ENCODE measurements at regions of chrX and their contacts with region 1.

Region 1: DNA sequence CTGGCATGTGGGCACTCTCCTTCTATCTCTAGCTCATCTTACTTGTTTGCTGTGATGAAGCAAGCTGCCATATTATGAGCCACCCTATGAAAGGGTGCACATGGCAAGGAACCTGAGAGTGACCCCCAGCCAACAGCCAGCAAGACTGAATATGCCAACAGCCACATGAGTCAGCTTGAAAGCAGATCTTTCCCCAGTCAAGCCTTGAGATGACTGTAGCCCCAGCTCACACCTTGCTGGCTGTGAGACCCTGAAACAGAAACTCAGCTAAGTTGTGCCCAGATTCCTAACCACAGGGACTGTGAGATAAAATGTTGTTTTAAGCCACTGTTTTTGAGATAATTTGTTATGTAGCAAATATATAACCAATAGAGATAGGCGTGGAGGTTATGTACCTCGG is 36.2 kb downstream of the KDM5C start:
- DNase-seq: peak; percentile 56
- H3K4me3 Mint-ChIP-seq: no peak overlapping the region
- H3K27ac Mint-ChIP-seq: no peak overlapping the region
- H3K4me1 Mint-ChIP-seq: peaks cover 18% of the 10 kb centered on the region
- H3K27me3 Mint-ChIP-seq: no peaks in the 10 kb centered on the region

Region 2: DNA sequence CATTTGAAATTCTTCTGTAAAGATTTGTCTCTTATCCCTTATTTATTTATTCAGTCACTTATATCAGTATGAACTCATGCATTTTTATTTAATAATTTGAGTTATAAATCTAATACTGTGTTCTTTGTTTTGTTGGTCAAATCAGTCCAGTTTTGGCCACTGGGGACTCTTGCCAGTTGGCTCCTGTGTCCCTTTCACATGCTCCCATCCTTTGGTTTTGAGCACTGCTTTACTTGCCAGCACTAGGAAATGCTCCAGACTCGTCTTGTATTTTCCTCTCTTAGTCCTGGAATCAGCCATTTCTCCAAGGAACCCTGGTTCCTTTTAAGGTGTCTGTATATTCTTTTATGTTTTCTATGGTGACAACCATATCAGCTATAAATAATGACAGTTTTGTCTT is 66.8 kb before region 1 on chrX:
- CTCF ChIA-PET with region 1: no interaction called
- intact Hi-C with region 1: no loop called
- DNase-seq: no peak
- H3K4me3 Mint-ChIP-seq: no peak overlapping the region
- H3K27ac Mint-ChIP-seq: no peak overlapping the region
- H3K4me1 Mint-ChIP-seq: peaks cover 10% of the 10 kb centered on the region
- H3K27me3 Mint-ChIP-seq: no peaks in the 10 kb centered on the region

Region 3: DNA sequence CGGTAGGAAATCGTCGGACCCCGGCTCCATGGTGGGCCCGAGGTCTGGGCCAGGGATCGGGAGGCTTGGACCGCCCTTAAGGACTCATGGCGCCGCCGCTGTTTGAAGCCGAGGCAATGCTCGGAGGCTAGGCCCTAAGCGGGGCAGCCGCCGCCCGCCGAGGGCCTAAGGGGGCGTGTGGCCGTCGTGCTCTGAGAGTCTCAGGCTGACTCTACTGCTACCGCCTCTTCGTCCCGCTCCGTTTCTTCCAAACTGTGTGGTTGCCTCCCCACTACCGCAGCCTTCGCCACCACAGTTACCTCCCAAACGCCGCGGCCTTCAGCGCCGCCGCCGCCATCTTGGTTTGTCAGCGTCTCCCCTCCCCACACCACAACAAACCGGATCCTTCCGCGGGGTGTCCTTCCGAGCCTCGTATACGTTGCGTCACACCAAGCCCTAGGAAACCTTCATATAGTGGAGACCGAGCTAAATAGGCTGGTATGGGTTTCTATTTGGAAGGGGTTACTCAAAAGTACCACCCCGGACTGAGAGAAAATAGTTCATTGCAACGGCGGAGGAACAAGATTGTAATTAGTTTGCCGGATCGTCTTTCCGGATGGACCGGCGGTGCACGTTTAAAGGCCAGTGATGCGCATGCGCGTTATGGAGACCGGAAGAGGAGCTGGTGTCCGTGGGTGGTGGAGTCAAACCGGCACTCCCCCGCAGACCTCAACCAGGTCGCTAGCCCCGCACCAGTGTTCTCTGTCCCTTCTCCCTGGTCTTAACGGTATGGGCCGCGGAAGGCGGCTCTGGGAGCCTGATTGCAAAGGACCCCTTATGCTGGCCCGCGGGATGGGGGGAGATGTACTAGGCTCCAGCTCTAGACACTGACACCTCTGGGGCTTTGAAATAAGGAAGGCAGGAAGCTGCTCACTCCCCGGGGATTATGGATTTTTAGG is 36.4 kb after region 1 on chrX and contains the start of gene KDM5C:
- CTCF ChIA-PET with region 1: no interaction called
- intact Hi-C with region 1: loop called (anchors 2 kb)
- DNase-seq: peak; percentile 89
- H3K4me3 Mint-ChIP-seq: peak within 1 kb of the TSS; percentile 91
- H3K27ac Mint-ChIP-seq: peak within 1 kb of the TSS; percentile 95
- H3K4me1 Mint-ChIP-seq: peaks cover 32% of the 10 kb centered on the region
- H3K27me3 Mint-ChIP-seq: no peaks in the 10 kb centered on the region
- total RNA-seq, gene KDM5C: 67.4 to 68.2 TPM

Region 4: GRCh38 chrX:53354659-53355058 is 165.9 kb after region 1 on chrX:
- CTCF ChIA-PET with region 1: no interaction called
- intact Hi-C with region 1: no loop called
- DNase-seq: no peak
- H3K4me3 Mint-ChIP-seq: no peak overlapping the region
- H3K27ac Mint-ChIP-seq: no peak overlapping the region
- H3K4me1 Mint-ChIP-seq: no peaks in the 10 kb centered on the region
- H3K27me3 Mint-ChIP-seq: no peaks in the 10 kb centered on the region